Spleen (tissue), 13 donors: ENCODE measurements at regions of chrX and their contacts with region 1.

Region 1: GRCh38 chrX:11533211-11533651 is 132.5 kb downstream of the ARHGAP6 start:
- DNase-seq: no peak
- H3K4me3 ChIP-seq: no peak overlapping the region
- H3K27ac ChIP-seq: no peak overlapping the region
- H3K4me1 ChIP-seq: no peaks in the 10 kb centered on the region
- H3K27me3 ChIP-seq: peaks cover 0 to 4% (median 0%) of the 10 kb centered on the region in 7 donors
- CTCF ChIP-seq: peak; percentile 60 to 97 (median 81)
- POLR2A ChIP-seq: no peak

Region 2: DNA sequence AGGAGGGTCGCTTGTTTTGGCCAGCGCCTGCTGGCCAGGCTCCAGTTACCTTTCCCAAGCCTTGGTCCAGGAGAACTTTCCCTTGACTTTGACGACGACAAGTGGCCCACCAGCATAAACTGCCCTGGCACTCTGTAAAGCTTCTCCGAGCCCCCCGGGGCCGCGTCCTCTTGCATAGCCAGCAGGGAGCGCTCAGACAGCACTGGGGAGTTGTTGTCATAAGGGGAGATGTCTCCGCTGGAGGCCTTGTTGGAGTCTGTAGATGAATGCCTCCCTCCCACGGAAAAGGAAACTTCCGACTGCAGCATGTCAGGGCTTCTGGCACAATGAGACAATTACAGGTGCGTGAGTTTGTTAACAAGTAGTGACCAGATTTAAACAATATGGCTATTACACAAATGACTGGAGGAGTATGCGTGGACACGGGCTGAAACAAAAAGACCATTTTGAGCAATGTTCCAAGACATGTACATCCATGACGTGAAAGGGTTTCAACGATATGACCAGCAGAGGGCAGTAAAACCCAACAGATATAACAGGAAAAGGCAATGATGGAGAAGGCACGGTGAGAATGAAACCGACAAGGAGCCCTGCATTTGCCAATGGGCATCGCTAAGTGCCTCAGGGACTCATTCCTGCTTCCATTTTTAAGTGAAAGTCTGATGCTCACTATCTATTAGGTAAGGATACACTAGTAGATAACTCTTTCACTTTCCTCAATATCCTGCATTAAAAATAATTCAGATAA is 389.1 kb before region 1 on chrX:
- intact Hi-C with region 1: loop called (anchors 5 kb)
- DNase-seq: peak; percentile 74
- H3K4me3 ChIP-seq: no peak overlapping the region
- H3K27ac ChIP-seq: no peak overlapping the region
- H3K4me1 ChIP-seq: peaks cover 0 to 9% (median 2%) of the 10 kb centered on the region in 6 donors
- H3K27me3 ChIP-seq: peaks cover 0 to 12% (median 3%) of the 10 kb centered on the region in 7 donors
- CTCF ChIP-seq: peak; percentile 16 to 79 (median 67)
- POLR2A ChIP-seq: no peak

Region 3: DNA sequence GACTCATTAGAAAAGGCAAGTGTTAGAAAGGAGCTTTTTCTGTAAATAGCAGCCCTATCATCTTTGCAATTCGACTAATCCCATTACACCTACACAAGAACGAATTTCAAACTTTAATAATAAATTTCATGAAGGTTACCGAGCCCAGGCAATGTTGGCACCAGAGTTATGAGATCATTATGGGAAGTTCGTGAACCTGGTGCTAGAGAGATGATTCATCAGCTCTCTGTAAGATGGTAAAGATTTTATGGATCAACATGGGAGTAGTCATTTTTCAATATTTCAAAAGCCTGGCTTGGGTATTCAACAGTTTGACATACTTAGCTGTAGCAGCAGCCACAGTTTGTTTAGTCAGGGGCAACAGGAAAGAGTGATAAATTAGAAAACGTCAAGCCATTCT is 204.2 kb before region 1 on chrX:
- intact Hi-C with region 1: no loop called
- DNase-seq: no peak
- H3K4me3 ChIP-seq: no peak overlapping the region
- H3K27ac ChIP-seq: no peak overlapping the region
- H3K4me1 ChIP-seq: no peaks in the 10 kb centered on the region
- H3K27me3 ChIP-seq: no peaks in the 10 kb centered on the region
- CTCF ChIP-seq: no peak
- POLR2A ChIP-seq: no peak

Region 4: GRCh38 chrX:11770320-11770719 is 237.1 kb after region 1 on chrX:
- intact Hi-C with region 1: loop called (anchors 5 kb)
- DNase-seq: peak; percentile 81
- H3K4me3 ChIP-seq: no peak overlapping the region
- H3K27ac ChIP-seq: peak overlapping the region in 2 of 8 donors; percentile 17 to 31
- H3K4me1 ChIP-seq: peaks cover 0 to 43% (median 12%) of the 10 kb centered on the region in 6 donors
- H3K27me3 ChIP-seq: no peaks in the 10 kb centered on the region
- CTCF ChIP-seq: peak; percentile 30 to 85 (median 74)
- POLR2A ChIP-seq: no peak